ENCODE measurements at regions of chr5 and their contacts with region 1.

Region 1: GRCh38 chr5:177113566-177114424 is 19.8 kb upstream of the NSD1 start:
- DNase-seq: peak; percentile 86
- H3K4me3 ChIP-seq: no peak overlapping the region
- H3K27ac ChIP-seq: no peak overlapping the region
- H3K4me1 ChIP-seq: peaks cover 20% of the 10 kb centered on the region
- H3K27me3 ChIP-seq: no peaks in the 10 kb centered on the region
- CTCF ChIP-seq: peak; percentile 80 to 97 (median 97)
- POLR2A ChIP-seq: no peak

Region 2: GRCh38 chr5:177303121-177303924 is 189.5 kb after region 1 on chr5 and contains the starts of genes PRELID1 and RAB24:
- intact Hi-C with region 1: loop called (anchors 10 kb)
- DNase-seq: peak; percentile 94
- H3K4me3 ChIP-seq: peak within 1 kb of the TSS; percentile 82 to 94
- H3K27ac ChIP-seq: peak within 1 kb of the TSS; percentile 76 to 82
- H3K4me1 ChIP-seq: peaks cover 19% of the 10 kb centered on the region
- H3K27me3 ChIP-seq: no peaks in the 10 kb centered on the region
- CTCF ChIP-seq: peak in 1 of 3 experiments; percentile 33
- POLR2A ChIP-seq: no peak
- total RNA-seq, gene PRELID1: 65.7 to 83.4 TPM
- total RNA-seq, gene RAB24: 25.5 to 29.4 TPM

Region 3: DNA sequence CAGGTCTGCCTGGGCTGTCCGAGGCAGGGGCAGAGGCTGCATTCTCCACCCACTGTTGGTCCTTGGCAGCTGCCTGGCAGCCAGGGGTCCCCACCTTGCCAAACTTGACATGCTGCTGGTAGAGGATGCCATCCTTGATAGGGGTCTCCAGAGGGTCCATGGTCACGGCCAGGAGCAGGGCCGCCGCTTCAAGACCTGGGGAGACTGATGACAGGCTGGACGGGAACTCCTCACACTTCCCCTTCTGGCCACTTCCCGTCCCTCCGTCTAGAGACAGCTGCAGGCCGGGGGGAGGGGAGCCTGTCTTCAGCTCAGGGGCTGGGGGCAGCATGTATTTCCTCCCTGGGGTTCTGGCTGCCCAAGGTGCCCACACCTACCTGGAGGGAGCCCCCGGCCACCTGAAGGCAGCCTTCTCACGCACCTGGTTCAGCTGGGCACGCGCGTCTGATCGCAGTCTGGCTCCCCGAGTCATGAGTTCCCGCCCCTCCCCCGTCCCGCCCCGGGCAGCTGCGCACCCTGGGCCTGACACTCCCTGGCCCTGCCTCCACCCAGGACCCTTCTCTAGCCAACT is 395.7 kb after region 1 on chr5 and contains the start of gene DOK3:
- intact Hi-C with region 1: no loop called
- DNase-seq: no peak
- H3K4me3 ChIP-seq: peak within 1 kb of the TSS in 1 of 2 donors; percentile 29
- H3K27ac ChIP-seq: peak within 1 kb of the TSS in 1 of 2 donors; percentile 14
- H3K4me1 ChIP-seq: peaks cover 2% of the 10 kb centered on the region
- H3K27me3 ChIP-seq: no peaks in the 10 kb centered on the region
- CTCF ChIP-seq: no peak
- POLR2A ChIP-seq: no peak
- total RNA-seq, gene DOK3: 10.7 to 18.7 TPM